HCT116 (cell line): ENCODE measurements at regions of chr1 and their contacts with region 1.

Region 1: DNA sequence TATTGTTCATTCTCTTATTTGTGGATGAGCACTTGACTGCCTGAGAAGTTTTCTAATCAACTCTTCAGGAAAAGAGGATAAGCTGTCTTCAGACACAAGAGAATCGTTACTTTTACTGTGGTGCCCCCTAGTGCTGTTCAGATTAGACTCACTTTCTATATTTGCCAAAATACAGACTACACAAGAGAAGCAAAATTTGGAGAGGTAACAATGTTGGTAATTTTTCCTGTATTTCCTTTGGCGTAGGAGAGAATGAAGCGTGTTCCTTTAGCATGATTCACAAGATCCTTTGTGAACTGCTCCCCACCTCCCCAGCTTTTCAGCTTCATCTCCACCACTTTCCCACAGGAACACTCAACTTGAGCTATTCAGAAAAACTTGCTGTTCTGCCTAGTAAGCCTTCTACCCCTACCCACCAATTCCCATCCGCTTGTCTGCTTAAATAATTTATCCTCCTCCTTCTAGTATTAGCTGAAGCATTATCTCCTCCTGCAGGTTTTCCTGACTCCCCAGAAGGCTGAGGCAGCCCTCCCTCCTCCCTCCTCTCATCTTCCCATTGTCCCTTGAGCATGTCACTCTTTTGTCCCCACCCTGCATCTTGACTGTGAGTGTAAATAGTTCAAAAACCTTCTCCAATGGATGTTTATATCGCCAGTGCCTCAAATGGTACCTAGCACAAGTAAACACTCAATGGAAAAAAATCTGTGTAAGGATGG is 4.5 kb downstream of the TNFSF4 start:
- DNase-seq: peak; percentile 56
- ATAC-seq: peak; percentile 90
- H3K4me3 ChIP-seq: no peak overlapping the region
- H3K27ac ChIP-seq: no peak overlapping the region; the same call in 1 of the 2 replicates
- H3K4me1 ChIP-seq: peaks cover 14 to 19% of the 10 kb centered on the region in 2 experiments; a peak in 3 of 4 replicates
- H3K27me3 ChIP-seq: no peaks in the 10 kb centered on the region
- CTCF ChIP-seq: peak; percentile 52 to 89 (median 77)
- POLR2A ChIP-seq: no peak
- RAD21 ChIP-seq: peak; percentile 98

Region 2: GRCh38 chr1:172826096-172826743 is 376.4 kb before region 1 on chr1:
- CTCF ChIA-PET with region 1: interaction called, 115 read pairs
- POLR2A ChIA-PET with region 1: interaction called, 3 read pairs
- RAD21 ChIA-PET with region 1: interaction called, 19 to 22 read pairs
- intact Hi-C with region 1: loop called (anchors 1 kb)
- DNase-seq: peak; percentile 61
- ATAC-seq: peak; percentile 85
- H3K4me3 ChIP-seq: no peak overlapping the region
- H3K27ac ChIP-seq: peak overlapping the region; percentile 48; the same call in 1 of the 2 replicates
- H3K4me1 ChIP-seq: peaks cover 10 to 41% of the 10 kb centered on the region in 2 experiments
- H3K27me3 ChIP-seq: no peaks in the 10 kb centered on the region
- CTCF ChIP-seq: peak; percentile 40 to 80 (median 66); a peak in 5 of 6 replicates
- POLR2A ChIP-seq: no peak
- RAD21 ChIP-seq: peak; percentile 95

Region 3: DNA sequence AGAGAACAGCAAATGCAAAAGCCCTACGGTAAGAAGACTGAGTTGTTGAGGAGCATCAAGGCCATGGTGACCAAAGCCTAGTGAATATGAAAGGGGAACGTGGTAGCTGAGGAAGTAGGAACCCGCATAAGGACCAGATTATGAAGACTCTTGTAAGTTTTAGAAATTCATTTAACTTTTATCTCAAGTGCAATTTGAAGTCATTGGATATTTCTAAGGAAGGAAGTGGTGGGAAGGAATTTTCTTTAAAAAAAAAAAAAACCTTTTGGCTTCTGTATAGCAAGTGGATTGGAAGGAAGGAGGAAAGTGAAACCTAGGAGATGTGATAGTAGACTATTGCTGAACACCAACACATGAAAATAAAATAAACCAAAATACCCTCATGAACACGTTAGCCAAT is 270.8 kb before region 1 on chr1:
- CTCF ChIA-PET with region 1: no interaction called
- POLR2A ChIA-PET with region 1: no interaction called
- RAD21 ChIA-PET with region 1: no interaction called
- intact Hi-C with region 1: loop called (anchors 2 kb)
- DNase-seq: no peak
- ATAC-seq: no peak
- H3K4me3 ChIP-seq: peak overlapping the region; percentile 18 to 56
- H3K27ac ChIP-seq: peak overlapping the region; percentile 89; the same call in 1 of the 2 replicates
- H3K4me1 ChIP-seq: peaks cover 32 to 70% of the 10 kb centered on the region in 2 experiments
- H3K27me3 ChIP-seq: no peaks in the 10 kb centered on the region
- CTCF ChIP-seq: no peak
- POLR2A ChIP-seq: no peak
- RAD21 ChIP-seq: no peak

Region 4: GRCh38 chr1:173095632-173096031 is 107.0 kb before region 1 on chr1:
- CTCF ChIA-PET with region 1: no interaction called
- POLR2A ChIA-PET with region 1: no interaction called
- RAD21 ChIA-PET with region 1: no interaction called
- intact Hi-C with region 1: no loop called
- DNase-seq: no peak
- ATAC-seq: no peak
- H3K4me3 ChIP-seq: no peak overlapping the region
- H3K27ac ChIP-seq: no peak overlapping the region
- H3K4me1 ChIP-seq: peaks cover 0 to 6% of the 10 kb centered on the region in 2 experiments; a peak in 1 of 4 replicates
- H3K27me3 ChIP-seq: no peaks in the 10 kb centered on the region
- CTCF ChIP-seq: no peak
- POLR2A ChIP-seq: no peak
- RAD21 ChIP-seq: no peak

Region 5: DNA sequence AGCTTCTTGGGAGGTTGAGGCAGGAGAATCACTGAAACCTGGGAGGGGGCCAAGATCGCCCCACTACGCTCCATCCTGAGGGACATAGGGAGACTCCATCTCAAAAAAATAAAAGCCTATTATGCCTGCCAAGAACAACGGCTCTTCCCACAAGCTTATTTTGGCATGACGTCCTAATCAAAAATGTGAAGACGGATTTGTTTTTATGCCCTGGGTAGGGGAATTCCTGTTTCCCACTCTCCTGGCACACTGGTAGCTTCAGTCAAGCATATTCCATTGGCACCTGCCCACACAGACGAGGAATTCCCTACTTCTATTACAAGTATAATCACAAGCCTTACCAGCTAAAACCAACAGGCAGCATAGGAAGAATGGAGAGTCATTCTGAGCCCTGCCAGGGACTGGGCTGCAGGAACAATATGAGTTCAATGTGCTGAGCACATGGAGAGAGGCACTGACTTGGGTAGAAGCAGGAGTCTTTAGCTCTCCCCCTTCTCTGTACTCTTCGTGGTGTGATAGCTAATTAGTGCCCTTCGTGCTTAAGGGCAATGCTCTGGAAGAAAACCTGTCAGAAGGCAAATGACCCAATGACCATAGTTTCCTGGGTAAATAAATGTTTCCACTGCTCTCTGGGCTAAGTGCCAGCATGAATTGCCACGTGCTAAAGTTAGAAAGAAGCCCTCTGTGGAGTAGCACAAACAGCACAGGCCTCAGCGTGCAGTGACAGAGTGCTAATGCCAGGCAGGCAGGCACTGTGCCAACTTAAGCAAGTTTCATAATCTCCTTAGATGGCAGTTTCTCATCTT is 12.3 kb before region 1 on chr1:
- CTCF ChIA-PET with region 1: interaction called, 10 read pairs
- POLR2A ChIA-PET with region 1: no interaction called
- RAD21 ChIA-PET with region 1: no interaction called
- intact Hi-C with region 1: no loop called
- DNase-seq: peak; percentile 40
- ATAC-seq: peak; percentile 77
- H3K4me3 ChIP-seq: no peak overlapping the region
- H3K27ac ChIP-seq: peak overlapping the region; percentile 49
- H3K4me1 ChIP-seq: peaks cover 17 to 22% of the 10 kb centered on the region in 2 experiments; a peak in 3 of 4 replicates
- H3K27me3 ChIP-seq: no peaks in the 10 kb centered on the region
- CTCF ChIP-seq: no peak
- POLR2A ChIP-seq: no peak
- RAD21 ChIP-seq: no peak

Region 6: DNA sequence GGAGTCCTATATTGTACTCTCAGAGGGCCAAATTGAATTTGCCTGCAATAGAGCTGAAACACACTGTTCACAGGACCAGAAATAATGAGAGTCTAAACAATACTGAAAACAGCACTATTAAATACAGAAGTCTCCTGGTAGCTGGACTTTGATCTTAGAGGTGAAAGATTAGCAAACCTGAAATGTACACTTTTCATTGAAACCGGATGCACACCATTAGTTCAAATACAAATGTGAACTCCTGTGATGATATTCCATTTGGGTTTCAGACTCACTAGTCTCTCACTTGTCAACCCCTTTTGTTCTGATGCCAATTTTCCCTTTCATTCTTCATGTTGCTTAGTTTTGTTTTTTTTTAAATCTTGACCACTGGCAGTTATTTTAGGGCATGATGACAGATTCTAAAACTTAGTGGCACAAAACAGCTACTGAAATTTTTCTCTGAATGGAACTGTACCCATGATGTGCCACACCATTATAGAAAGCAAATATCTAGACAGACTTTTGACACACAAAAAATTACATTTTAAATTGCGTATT is 10.4 kb after region 1 on chr1:
- CTCF ChIA-PET with region 1: interaction called, 13 read pairs
- POLR2A ChIA-PET with region 1: no interaction called
- RAD21 ChIA-PET with region 1: no interaction called
- intact Hi-C with region 1: no loop called
- DNase-seq: no peak
- ATAC-seq: no peak
- H3K4me3 ChIP-seq: no peak overlapping the region
- H3K27ac ChIP-seq: no peak overlapping the region
- H3K4me1 ChIP-seq: peaks cover 10 to 12% of the 10 kb centered on the region in 2 experiments; a peak in 3 of 4 replicates
- H3K27me3 ChIP-seq: no peaks in the 10 kb centered on the region
- CTCF ChIP-seq: no peak
- POLR2A ChIP-seq: no peak
- RAD21 ChIP-seq: no peak